Left colon (tissue), 2 donors: ENCODE measurements at regions of chr19 and their contacts with region 1.

Region 1: DNA sequence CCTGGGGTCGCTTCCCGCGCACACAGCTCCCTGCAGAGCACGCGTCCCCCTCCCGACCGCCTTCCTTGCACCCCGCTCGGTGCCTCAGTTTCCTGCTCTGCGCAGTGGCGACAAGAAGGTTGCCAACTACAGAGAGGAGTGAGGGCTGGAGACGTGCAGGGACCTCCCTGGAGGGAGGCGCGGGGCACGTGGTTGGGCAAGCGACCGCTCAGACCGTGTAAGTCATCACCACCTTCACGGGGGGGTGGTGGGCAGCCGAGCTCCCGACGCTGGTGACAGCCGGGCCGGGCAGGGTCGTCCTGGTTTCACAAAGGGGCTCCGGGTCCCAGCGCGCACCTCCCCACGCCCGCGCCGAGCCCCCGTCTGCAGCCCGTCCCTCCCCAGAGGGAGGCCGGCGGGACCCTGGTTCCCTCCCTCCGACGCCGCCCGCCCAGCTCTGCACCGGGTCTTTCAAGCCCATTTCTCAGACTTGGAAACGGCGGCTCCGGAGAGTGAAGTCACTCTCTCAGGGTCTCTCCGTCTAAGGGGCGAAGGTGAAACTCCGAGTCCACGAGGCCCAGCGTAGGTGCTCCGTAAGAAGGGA is 801 bp upstream of the ARID3A start:
- DNase-seq: peak; percentile 52 to 62
- ATAC-seq: peak; percentile 62

Region 2: GRCh38 chr19:771332-771785 is 153.7 kb before region 1 on chr19:
- intact Hi-C with region 1: loop called in 1 of 2 experiments (anchors 5 kb)
- DNase-seq: no peak
- ATAC-seq: peak; percentile 31

Region 3: GRCh38 chr19:813359-814257 is 111.4 kb before region 1 on chr19:
- intact Hi-C with region 1: no loop called
- DNase-seq: no peak
- ATAC-seq: peak; percentile 10

Region 4: DNA sequence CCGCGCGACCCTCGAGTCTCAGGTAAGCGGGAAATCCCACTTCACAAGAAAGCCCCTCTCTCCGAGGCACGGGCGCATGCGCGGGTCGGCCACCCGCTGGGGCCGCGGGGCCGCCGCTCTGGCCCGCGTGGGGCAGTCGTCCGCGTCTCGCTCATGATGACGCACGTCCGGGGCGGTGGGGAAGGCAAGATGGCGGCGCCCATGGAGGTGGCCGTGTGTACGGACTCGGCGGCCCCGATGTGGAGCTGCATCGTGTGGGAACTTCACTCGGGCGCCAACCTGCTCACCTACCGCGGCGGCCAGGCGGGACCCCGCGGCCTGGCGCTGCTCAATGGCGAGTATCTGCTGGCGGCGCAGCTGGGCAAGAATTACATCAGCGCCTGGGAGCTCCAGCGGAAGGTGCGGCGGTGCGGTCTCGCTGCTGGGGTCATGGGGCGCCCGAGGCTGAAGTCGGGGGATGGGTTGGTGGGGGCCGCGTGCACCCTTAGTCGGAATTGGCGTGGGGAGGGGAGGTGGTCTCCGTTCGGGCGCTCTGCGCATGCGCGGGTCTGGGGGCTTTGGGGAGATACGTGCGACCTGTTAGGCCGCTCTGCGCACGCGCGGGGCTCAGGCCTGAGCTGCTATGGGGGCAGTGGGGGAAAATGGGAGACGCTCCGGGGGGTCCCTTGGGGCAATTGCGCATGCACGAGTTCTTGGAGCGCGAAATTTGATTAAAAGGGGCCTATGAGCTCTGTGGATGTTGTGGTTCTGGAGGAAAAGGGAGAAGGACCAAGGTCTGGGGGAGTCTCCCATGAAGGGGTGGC is 59.3 kb after region 1 on chr19 and contains the start of gene WDR18:
- intact Hi-C with region 1: loop called (anchors 5 kb)
- DNase-seq: peak; percentile 91 to 95
- ATAC-seq: peak; percentile 96
- total RNA-seq, gene WDR18: 21.5 to 28.1 TPM

Region 5: GRCh38 chr19:1009041-1009975 is 84.3 kb after region 1 on chr19:
- intact Hi-C with region 1: no loop called
- DNase-seq: no peak
- ATAC-seq: peak; percentile 10